Breast epithelium (tissue), 4 donors: ENCODE measurements at regions of chr1 and their contacts with region 1.

Region 1: DNA sequence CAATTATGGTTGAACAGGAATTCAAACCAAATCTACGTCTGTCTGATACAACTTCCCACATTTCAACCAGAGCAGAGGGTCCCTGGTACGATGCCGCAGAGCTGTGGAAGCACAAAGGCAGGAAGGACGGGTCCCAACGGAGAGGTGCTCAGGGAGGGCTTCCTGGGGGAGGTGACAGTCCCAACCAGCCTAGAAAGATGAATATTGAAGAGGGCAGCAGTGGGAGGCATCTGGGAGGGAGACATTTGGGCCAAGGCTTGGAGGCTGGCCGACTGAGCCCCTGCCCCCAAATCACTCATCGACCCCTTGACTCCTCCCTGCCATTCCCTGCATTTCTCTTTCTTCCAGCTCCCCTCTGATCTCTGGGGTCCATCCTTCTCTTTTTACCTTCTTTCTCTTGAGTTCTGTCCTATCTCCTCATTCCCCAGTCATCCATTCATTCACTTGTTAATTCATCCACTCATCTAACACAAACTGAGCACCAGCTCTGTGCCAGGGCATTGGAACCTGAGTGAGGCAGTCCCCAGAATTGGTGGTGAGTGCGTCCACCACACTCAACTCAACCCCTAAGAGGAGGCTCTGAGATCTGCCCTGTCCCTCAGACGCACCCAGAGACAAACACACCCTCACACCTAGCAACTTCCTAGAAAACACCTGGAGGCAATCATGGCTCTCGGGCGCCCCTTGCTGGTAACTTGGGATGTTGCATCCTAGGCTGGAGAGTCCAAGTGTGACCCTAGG is 13.2 kb upstream of the CELA3B start:
- DNase-seq: peak; percentile 73 to 86
- H3K4me3 ChIP-seq: no peak overlapping the region
- H3K27ac ChIP-seq: no peak overlapping the region
- H3K4me1 ChIP-seq: no peaks in the 10 kb centered on the region
- H3K27me3 ChIP-seq: no peaks in the 10 kb centered on the region
- CTCF ChIP-seq: peak; percentile 89 to 95 (median 91)
- POLR2A ChIP-seq: no peak

Region 2: GRCh38 chr1:21099034-21099868 is 864.4 kb before region 1 on chr1:
- intact Hi-C with region 1: no loop called
- DNase-seq: no peak
- H3K4me3 ChIP-seq: no peak overlapping the region
- H3K27ac ChIP-seq: no peak overlapping the region
- H3K4me1 ChIP-seq: no peaks in the 10 kb centered on the region
- H3K27me3 ChIP-seq: no peaks in the 10 kb centered on the region
- CTCF ChIP-seq: no peak
- POLR2A ChIP-seq: no peak

Region 3: DNA sequence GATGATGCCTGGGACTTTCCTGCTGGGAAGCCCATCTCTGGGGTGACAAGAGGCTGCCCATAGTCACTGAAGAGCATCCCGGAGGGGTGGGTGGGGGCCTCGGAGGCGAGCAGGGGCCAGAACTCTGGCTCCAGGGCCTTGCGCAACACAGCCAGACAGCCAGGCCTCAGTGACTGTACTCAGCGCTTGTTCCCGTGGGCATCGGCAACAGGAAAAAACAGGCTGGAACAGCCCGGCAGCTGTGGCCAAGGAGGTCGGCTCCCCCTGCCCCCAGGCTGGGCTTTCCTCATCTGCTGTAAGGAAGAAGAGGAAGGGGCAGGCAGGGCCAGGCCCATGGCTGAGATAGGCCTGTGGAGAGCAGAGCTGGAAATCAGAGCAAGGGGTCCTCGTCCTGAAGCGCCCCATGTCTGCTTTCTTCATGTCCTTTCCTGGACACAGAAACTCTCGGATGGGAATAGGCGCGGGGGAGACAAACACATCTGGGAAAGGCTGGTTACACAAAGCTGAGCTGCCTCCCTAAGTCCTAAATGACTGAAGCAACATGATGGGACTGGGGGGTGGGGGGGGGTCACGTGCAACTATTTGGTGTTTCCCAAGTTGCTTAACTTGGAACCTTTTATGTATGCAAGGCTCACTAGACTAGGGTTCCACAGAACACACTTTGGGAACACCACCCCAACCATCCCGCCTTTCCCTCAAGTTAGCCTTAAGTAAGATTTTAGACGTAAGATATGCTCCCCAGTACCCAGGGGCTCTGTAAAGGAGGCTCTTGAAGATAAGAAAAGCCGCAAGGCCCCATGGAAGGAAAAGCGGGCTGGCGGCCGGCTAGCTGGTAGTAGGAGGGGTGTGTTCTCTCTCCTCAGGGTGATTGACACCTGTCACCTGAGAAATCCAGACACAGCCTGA is 57.2 kb before region 1 on chr1:
- intact Hi-C with region 1: loop called (anchors 2 kb)
- DNase-seq: peak in 1 of 2 donors; percentile 64
- H3K4me3 ChIP-seq: no peak overlapping the region
- H3K27ac ChIP-seq: peak overlapping the region; percentile 88 to 95
- H3K4me1 ChIP-seq: peaks cover 8 to 13% of the 10 kb centered on the region in 2 donors
- H3K27me3 ChIP-seq: no peaks in the 10 kb centered on the region
- CTCF ChIP-seq: no peak
- POLR2A ChIP-seq: no peak

Region 4: GRCh38 chr1:21919520-21919919 is 44.1 kb before region 1 on chr1:
- intact Hi-C with region 1: no loop called
- DNase-seq: no peak
- H3K4me3 ChIP-seq: no peak overlapping the region
- H3K27ac ChIP-seq: peak overlapping the region in 1 of 2 donors; percentile 81
- H3K4me1 ChIP-seq: peaks cover 0 to 8% of the 10 kb centered on the region in 2 donors
- H3K27me3 ChIP-seq: no peaks in the 10 kb centered on the region
- CTCF ChIP-seq: no peak
- POLR2A ChIP-seq: no peak